Panc1 (cell line): ENCODE measurements at regions of chr20 and their contacts with region 1.

Region 1: DNA sequence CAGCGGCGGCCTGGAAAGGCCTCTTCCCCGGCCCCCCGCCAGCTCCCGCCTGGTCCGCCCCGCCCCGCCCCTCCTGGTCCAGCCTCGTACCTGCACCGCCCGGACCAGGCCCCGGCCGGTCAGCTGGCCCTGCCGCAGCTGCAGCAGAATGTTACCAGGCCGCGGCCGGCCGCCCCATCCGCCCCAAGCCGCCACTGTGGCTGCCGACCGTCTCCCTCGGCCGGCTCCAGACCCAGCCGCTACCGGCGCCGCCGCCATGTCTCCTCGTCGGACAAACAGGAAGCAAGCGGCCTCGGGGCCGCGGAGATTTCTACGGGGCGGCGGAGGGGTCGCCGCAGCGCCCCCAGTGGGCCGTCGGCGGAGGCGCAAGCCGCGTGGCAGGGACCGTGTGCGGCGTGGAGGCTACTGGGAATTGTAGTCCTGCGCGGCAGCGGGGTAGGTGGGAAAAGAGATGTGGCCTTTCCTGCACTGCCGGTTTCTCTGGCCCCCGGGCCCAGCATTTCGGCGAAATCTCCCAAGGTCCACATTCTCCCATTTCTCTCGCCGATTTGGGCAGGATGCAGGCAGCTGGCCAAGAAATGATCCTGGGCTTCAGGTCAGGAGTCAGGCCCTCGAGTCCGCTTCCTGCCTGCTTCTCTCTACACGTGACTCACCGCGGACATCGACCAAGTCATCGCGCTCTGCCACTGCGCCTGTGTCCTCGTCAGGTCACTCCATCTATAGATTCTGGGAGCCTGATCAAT is at the start of gene TRPC4AP:
- DNase-seq: peak; percentile 75
- ATAC-seq: peak; percentile 98
- H3K4me3 ChIP-seq: peak within 1 kb of the TSS; percentile 78 to 85
- H3K27ac ChIP-seq: peak within 1 kb of the TSS; percentile 89
- H3K4me1 ChIP-seq: peaks cover 14% of the 10 kb centered on the region
- H3K27me3 ChIP-seq: no peaks in the 10 kb centered on the region
- CTCF ChIP-seq: peak; percentile 99
- total RNA-seq, gene TRPC4AP: 48.4 TPM

Region 2: DNA sequence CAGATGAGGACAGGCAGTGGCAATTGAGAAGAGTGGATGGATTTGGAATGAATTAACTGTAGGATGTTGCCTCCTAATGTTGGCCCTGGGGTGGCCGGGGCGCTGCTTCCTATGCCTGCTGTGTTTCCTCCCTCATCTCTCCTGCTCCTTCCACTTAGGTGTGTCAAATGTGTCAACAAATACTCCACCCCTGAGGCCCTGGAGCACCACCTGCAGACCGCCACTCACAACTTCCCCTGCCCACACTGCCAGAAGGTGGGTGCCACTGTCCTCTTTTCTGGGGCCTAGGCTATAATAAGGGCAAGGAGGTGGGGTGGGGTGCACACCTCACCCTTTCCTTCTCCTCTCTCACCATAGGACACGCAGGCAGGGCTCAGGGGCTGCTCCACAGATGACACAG is 1311.6 kb before region 1 on chr20:
- CTCF ChIA-PET with region 1: interaction called, 13 read pairs
- POLR2A ChIA-PET with region 1: no interaction called
- in situ Hi-C with region 1: no loop called
- intact Hi-C with region 1: no loop called
- DNase-seq: no peak
- ATAC-seq: no peak
- H3K4me3 ChIP-seq: no peak overlapping the region
- H3K27ac ChIP-seq: no peak overlapping the region
- H3K4me1 ChIP-seq: no peaks in the 10 kb centered on the region
- H3K27me3 ChIP-seq: no peaks in the 10 kb centered on the region
- CTCF ChIP-seq: no peak

Region 3: GRCh38 chr20:34663213-34663943 is 429.3 kb before region 1 on chr20:
- CTCF ChIA-PET with region 1: no interaction called
- POLR2A ChIA-PET with region 1: no interaction called
- in situ Hi-C with region 1: no loop called
- intact Hi-C with region 1: no loop called
- DNase-seq: no peak
- ATAC-seq: 0 out of 2 replicates have a peak, but pooled peaks have one; percentile 38
- H3K4me3 ChIP-seq: no peak overlapping the region
- H3K27ac ChIP-seq: no peak overlapping the region
- H3K4me1 ChIP-seq: no peaks in the 10 kb centered on the region
- H3K27me3 ChIP-seq: no peaks in the 10 kb centered on the region
- CTCF ChIP-seq: no peak

Region 4: DNA sequence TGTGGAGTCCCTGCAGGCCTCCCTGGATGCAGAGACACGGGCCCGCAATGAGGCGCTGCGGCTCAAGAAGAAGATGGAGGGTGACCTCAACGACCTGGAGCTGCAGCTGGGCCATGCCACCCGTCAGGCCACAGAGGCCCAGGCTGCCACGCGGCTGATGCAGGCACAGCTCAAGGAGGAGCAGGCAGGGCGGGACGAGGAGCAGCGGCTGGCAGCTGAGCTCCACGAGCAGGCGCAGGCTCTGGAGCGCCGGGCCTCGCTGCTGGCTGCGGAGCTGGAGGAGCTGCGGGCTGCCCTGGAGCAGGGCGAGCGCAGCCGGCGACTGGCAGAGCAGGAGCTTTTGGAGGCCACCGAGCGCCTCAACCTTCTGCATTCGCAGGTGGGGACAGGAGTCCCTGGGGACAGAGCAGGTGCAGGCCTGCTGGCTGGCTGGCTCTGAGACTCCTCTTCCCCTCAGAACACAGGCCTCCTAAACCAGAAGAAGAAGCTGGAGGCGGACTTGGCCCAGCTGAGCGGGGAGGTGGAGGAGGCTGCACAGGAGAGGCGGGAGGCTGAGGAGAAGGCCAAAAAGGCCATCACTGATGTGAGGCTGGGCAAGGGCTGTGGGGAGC is 92.3 kb before region 1 on chr20:
- CTCF ChIA-PET with region 1: interaction called, 10 read pairs
- POLR2A ChIA-PET with region 1: no interaction called
- in situ Hi-C with region 1: no loop called
- intact Hi-C with region 1: no loop called
- DNase-seq: no peak
- ATAC-seq: no peak
- H3K4me3 ChIP-seq: no peak overlapping the region
- H3K27ac ChIP-seq: no peak overlapping the region
- H3K4me1 ChIP-seq: no peaks in the 10 kb centered on the region
- H3K27me3 ChIP-seq: no peaks in the 10 kb centered on the region
- CTCF ChIP-seq: no peak

Region 5: GRCh38 chr20:35146920-35147574 is 54.4 kb after region 1 on chr20 and contains the start of gene EDEM2:
- CTCF ChIA-PET with region 1: interaction called, 17 read pairs
- POLR2A ChIA-PET with region 1: no interaction called
- in situ Hi-C with region 1: no loop called
- intact Hi-C with region 1: no loop called
- DNase-seq: peak; percentile 82
- ATAC-seq: peak; percentile 96
- H3K4me3 ChIP-seq: peak within 1 kb of the TSS; percentile 92 to 96
- H3K27ac ChIP-seq: peak within 1 kb of the TSS; percentile 90
- H3K4me1 ChIP-seq: peaks cover 2% of the 10 kb centered on the region; the same call in 1 of the 2 replicates
- H3K27me3 ChIP-seq: no peaks in the 10 kb centered on the region
- CTCF ChIP-seq: no peak
- total RNA-seq, gene EDEM2: 34.7 TPM

Region 6: DNA sequence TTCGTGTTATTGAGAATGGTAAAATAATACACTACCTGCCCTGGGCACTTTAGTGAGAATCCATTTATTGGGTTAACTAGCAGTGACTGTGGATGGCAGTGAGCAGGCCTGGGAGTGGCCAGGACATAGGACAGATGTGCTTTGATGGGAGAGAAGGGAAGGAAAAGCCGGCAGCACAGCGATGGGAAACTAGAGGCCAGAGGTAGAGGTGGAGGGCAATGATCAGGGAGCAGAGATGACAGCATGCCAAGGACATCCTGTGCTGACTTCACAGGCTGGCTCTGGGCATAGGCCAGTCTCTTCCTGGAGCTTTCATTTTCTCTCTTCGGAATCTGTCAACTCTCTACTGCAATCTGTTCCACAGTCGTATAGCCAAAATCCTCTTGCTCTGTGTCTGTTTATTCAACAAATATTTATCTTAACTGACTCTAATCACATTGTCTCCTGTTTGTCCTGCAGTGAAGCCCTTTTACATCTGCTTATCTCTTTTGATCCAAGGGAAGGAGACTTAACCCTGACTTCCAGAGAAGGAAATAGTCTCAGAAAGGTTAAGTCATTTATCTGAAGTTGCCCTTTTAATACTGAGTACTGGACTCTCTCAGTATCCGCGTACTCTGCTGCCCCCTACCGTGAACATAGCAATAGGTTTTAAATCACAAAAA is 115.4 kb after region 1 on chr20:
- CTCF ChIA-PET with region 1: interaction called, 10 read pairs
- POLR2A ChIA-PET with region 1: no interaction called
- in situ Hi-C with region 1: no loop called
- intact Hi-C with region 1: loop called (anchors 2 kb)
- DNase-seq: peak; percentile 74
- ATAC-seq: peak; percentile 98
- H3K4me3 ChIP-seq: peak overlapping the region in 1 of 2 experiments; percentile 29; a peak in 2 of 4 replicates
- H3K27ac ChIP-seq: no peak overlapping the region
- H3K4me1 ChIP-seq: no peaks in the 10 kb centered on the region
- H3K27me3 ChIP-seq: no peaks in the 10 kb centered on the region
- CTCF ChIP-seq: peak; percentile 82